Left ventricle myocardium inferior (tissue), 1 donor: ENCODE measurements at regions of chr19 and their contacts with region 1.

Region 1: DNA sequence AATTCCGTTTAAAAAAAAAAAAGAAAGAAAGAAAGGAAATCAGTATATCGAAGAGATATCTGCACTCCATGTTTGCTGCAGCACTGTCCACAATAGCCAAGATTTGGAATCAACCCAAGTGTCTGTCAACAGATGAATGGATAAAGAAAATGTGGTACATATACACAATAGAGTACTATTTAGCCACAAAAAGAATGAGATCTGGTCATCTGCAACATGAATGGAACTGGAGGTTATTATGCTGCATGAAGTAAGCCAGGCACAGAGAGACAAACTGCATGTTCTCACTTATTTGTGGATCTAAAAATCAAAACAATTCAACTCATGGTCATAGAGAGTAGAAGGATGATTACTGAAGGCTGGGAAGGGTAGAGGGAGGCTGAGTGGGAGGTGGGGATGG is 16.3 kb downstream of the ZNF565 start:
- DNase-seq: no peak
- H3K4me3 ChIP-seq: no peak overlapping the region
- H3K27ac ChIP-seq: no peak overlapping the region
- H3K4me1 ChIP-seq: no peaks in the 10 kb centered on the region
- H3K27me3 ChIP-seq: no peaks in the 10 kb centered on the region
- CTCF ChIP-seq: no peak

Region 2: DNA sequence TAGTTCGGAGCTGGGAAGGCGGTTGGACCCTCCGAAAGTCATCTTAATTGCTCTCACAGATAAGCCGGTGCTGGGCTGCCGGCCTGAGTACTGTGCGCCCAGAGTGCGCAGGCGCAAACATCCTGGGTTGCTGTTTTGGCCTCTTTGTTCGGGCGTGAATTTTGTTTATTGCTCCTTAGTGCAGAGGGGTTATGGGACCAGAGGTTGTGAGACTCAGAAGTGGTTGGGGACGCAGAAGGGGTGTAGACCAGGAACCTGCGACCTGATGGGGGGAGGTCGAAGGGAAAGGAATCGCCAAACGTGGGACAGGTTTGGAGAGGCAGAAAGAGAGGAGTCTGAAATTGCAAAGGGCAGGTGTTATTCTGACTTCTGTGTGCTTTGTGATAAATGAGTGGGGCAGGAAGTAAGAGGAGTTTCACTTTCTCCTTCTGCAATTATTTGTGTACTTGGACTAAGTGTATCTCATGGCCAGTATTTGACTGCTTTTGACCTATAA is 291.8 kb after region 1 on chr19:
- intact Hi-C with region 1: loop called (anchors 10 kb)
- DNase-seq: peak; percentile 80
- H3K4me3 ChIP-seq: peak overlapping the region; percentile 95
- H3K27ac ChIP-seq: peak overlapping the region; percentile 98
- H3K4me1 ChIP-seq: peaks cover 29% of the 10 kb centered on the region
- H3K27me3 ChIP-seq: no peaks in the 10 kb centered on the region
- CTCF ChIP-seq: no peak